ENCODE measurements at regions of chr10 and their contacts with region 1.

Region 1: GRCh38 chr10:3852147-3852904 is 67.3 kb upstream of the KLF6 start:
- DNase-seq: peak; percentile 94
- ATAC-seq: peak; percentile 86
- H3K4me3 ChIP-seq: peak overlapping the region; percentile 5; the same call in 1 of the 2 replicates
- H3K27ac ChIP-seq: peak overlapping the region; percentile 91
- H3K4me1 ChIP-seq: peaks cover 51% of the 10 kb centered on the region
- H3K27me3 ChIP-seq: no peaks in the 10 kb centered on the region
- CTCF ChIP-seq: no peak

Region 2: DNA sequence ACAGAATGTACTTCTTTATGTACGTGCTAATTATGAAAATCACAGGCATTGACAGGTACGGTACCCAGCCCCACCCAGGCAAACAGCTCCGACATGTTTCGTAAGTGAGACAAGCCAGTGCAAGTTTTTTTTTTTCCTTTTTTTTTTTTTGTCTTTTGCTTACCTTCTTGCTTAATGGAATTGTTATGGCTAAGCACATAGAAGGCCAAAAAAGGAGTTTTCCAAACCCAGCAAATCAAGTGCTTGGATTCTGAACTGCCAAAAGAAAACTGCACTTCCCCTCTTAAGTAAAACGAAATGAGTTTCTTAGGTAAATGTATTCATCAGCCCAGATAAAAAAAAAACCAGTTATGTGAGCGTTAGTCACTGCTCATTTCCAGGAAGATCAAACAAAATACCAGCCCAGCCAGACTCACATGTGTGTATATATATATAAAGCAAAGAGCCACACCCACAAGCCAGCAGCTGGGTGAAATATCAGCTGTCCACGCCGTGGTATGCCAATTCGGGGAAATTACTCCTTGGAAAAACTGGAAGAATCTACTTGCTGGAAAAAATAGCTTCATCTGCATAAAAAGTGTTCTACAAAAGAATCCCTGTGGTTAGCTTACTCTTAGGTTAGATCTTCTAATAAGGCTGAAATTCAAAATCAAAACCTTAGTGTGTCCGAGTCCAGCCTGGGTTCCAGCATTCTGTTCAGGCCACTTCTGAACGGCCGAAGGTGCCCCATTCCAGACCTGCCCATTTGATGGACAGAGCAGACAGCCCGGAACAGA is 75.3 kb before region 1 on chr10:
- CTCF ChIA-PET with region 1: no interaction called
- POLR2A ChIA-PET with region 1: interaction called, 17 read pairs
- intact Hi-C with region 1: no loop called
- DNase-seq: peak; percentile 83
- ATAC-seq: peak; percentile 18
- H3K4me3 ChIP-seq: no peak overlapping the region
- H3K27ac ChIP-seq: peak overlapping the region; percentile 86
- H3K4me1 ChIP-seq: peaks cover 65% of the 10 kb centered on the region
- H3K27me3 ChIP-seq: no peaks in the 10 kb centered on the region
- CTCF ChIP-seq: no peak

Region 3: GRCh38 chr10:3805791-3806461 is 46.4 kb before region 1 on chr10:
- CTCF ChIA-PET with region 1: interaction called, 6 read pairs
- POLR2A ChIA-PET with region 1: interaction called, 5 read pairs
- intact Hi-C with region 1: loop called (anchors 1 kb)
- DNase-seq: peak; percentile 77
- ATAC-seq: peak; percentile 29
- H3K4me3 ChIP-seq: peak overlapping the region; percentile 54; the same call in 1 of the 2 replicates
- H3K27ac ChIP-seq: peak overlapping the region; percentile 100
- H3K4me1 ChIP-seq: peaks cover 72% of the 10 kb centered on the region
- H3K27me3 ChIP-seq: no peaks in the 10 kb centered on the region
- CTCF ChIP-seq: no peak

Region 4: GRCh38 chr10:3828404-3829155 is 23.7 kb before region 1 on chr10:
- CTCF ChIA-PET with region 1: no interaction called
- POLR2A ChIA-PET with region 1: interaction called, 4 read pairs
- intact Hi-C with region 1: loop called (anchors 2 kb)
- DNase-seq: peak; percentile 31
- ATAC-seq: peak; percentile 20; the same call in 1 of the 2 replicates
- H3K4me3 ChIP-seq: peak overlapping the region; percentile 71
- H3K27ac ChIP-seq: peak overlapping the region; percentile 37
- H3K4me1 ChIP-seq: peaks cover 13% of the 10 kb centered on the region; the same call in 1 of the 2 replicates
- H3K27me3 ChIP-seq: no peaks in the 10 kb centered on the region
- CTCF ChIP-seq: no peak

Region 5: DNA sequence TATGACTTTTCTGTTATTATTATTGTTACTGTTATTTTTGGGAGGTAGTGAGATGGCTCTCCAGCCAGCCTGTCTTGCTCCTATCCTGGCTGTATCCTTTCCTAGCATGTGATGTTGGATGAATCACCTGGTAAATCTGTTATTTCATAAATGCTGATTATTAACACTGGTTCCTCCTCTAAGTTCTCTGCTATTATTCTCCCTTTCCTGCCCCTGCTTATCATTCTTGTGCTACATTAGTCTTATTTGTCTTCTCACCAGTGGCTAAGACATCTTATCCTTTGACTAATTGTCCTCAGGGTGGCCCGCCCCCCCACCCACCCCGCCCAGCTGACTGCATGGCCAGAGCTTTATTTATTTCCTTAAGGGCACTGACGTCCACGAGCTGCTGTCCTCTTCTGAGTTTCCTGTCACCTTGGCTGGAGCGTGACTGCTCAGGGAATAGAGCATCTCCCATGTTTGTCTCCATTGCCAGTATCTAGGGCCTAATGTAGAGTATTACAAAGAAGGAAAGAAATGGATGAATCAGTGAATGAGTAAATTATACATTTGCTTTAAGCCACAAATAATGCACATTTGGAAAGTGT is 42.8 kb after region 1 on chr10:
- CTCF ChIA-PET with region 1: no interaction called
- POLR2A ChIA-PET with region 1: interaction called, 4 read pairs
- intact Hi-C with region 1: loop called (anchors 2 kb)
- DNase-seq: peak; percentile 49
- ATAC-seq: peak; percentile 76
- H3K4me3 ChIP-seq: no peak overlapping the region
- H3K27ac ChIP-seq: peak overlapping the region; percentile 85
- H3K4me1 ChIP-seq: peaks cover 38% of the 10 kb centered on the region
- H3K27me3 ChIP-seq: no peaks in the 10 kb centered on the region
- CTCF ChIP-seq: no peak

Region 6: DNA sequence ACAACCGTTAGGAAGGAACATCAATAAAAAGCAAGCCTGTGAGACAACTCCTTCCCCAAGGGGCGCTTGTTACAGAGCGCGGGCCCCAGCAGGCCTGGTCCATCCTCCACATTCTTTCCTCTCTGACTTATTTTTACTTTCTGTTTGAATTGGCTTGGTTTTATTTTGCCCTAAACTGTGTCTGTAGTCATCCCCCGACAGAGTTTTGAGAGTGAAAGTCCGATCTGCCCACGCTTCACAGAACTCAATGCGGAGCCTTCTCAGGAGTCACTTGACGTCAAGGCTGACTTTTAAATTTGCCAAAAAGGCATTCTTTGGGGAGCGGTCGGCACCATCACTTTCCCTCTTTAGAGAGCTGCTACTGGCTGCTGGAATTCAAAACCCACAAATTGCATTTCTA is 82.8 kb after region 1 on chr10:
- CTCF ChIA-PET with region 1: no interaction called
- POLR2A ChIA-PET with region 1: no interaction called
- intact Hi-C with region 1: loop called (anchors 5 kb)
- DNase-seq: no peak
- ATAC-seq: no peak
- H3K4me3 ChIP-seq: no peak overlapping the region
- H3K27ac ChIP-seq: peak overlapping the region; percentile 58
- H3K4me1 ChIP-seq: peaks cover 11% of the 10 kb centered on the region
- H3K27me3 ChIP-seq: no peaks in the 10 kb centered on the region
- CTCF ChIP-seq: no peak

Region 7: DNA sequence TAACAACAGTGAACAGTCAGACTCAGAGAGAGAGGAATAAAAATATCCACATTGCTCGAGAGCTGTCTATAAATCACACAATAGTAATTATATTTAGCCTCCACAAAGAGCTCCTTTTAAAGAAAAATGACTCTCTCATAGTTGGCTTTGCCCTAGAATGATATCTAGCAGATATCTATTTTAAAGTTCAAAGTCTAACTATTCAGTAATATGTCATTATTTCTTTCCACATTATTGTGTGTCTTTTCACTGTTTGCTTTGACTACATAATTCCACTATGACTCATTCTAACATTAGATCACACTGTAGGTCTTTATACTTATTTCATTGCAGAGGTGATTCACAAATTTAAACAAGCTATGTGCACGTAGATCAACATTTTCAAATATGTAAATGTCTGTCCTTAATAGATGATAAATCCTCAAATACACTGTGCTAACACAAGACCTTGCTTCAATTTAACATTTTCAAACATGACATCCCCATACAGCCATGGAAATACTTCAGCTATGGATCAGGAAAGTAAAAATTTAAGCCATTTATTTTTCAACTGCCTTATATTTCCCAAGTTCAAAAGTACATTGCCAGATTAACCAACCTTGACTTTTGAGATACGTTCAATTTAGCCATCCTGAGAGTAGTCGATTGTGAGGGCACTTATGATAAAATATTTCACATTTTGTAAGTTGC is 873.7 kb after region 1 on chr10:
- CTCF ChIA-PET with region 1: no interaction called
- POLR2A ChIA-PET with region 1: no interaction called
- intact Hi-C with region 1: loop called (anchors 1 kb)
- DNase-seq: peak; percentile 83
- ATAC-seq: peak; percentile 94
- H3K4me3 ChIP-seq: peak overlapping the region; percentile 34; the same call in 1 of the 2 replicates
- H3K27ac ChIP-seq: peak overlapping the region; percentile 98
- H3K4me1 ChIP-seq: peaks cover 39% of the 10 kb centered on the region
- H3K27me3 ChIP-seq: no peaks in the 10 kb centered on the region
- CTCF ChIP-seq: no peak